ENCODE measurements at regions of chr11 and their contacts with region 1.

Region 1: DNA sequence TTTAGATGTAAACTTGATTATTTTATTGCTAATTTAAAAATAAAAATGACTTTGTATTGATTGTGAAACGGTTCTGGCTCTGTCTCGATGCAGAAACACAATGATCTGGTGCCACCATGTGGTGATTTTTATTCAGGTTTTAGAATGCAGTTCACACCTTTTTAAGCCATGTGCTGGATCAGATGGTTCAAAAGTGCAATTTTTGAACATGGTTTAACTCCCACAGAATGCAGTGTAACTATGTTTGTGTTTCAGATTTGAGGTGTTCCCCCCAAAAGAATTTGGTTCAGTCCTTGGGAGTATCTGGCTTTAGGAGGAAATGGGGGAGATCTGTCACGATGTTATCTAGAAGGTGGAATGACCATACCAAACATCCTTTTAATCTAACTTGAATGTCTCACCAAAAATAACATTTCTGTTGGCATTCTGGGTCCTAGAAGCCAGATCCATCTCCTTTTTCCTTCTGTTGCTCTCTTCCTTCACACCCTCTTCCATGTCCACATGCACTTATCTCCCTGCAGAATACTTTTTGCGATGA is 7.9 kb downstream of the MRPL16 start:
- DNase-seq: peak; percentile 73
- H3K4me3 ChIP-seq: no peak overlapping the region
- H3K27ac ChIP-seq: no peak overlapping the region
- H3K4me1 ChIP-seq: peaks cover 4% of the 10 kb centered on the region
- CTCF ChIP-seq: peak; percentile 92

Region 2: GRCh38 chr11:59542142-59542810 is 260.4 kb before region 1 on chr11:
- CTCF ChIA-PET with region 1: no interaction called
- POLR2A ChIA-PET with region 1: no interaction called
- intact Hi-C with region 1: loop called (anchors 2 kb)
- DNase-seq: no peak
- H3K4me3 ChIP-seq: no peak overlapping the region
- H3K27ac ChIP-seq: no peak overlapping the region
- H3K4me1 ChIP-seq: peaks cover 5% of the 10 kb centered on the region
- CTCF ChIP-seq: no peak

Region 3: DNA sequence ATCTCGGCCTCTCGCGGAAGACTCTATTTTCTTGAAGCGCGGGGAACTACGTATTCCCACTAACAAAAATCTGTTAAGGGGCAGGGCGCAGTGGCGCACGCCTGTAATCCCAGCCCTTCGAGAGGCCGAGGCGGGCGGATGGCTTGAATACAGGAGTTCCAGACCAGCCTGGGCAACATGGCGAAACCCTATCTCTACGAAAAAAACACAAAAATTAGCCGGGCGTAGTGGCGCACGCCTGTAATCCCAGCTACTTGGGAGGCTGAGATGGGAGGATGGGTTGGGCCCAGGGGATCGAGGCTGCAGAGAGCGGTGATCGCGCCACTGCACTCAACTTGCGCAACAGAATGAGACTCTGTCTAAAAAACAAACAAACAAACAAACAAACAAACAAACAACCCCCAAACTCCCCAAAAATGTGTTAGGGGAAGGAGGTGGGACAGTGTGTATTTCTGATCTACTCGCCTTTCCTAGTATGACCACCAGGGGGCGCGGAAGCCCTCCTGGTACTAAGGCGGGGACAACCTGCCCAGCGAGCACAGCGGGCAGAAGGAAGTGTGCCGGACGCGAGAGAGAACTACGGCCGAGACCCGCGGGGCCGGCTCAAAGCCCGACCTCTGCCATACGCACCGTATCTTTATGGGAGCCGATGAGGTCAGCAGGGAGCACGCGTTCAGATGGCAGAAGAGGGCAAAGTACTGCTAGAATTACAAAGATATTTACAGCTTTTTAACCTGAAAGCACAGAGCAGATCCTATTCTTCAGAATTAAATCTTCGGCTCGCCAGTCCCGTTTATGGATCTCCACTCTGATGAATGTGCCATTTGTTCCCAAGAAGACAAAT is 48.8 kb before region 1 on chr11:
- CTCF ChIA-PET with region 1: interaction called, 9 read pairs
- POLR2A ChIA-PET with region 1: interaction called, 6 read pairs
- intact Hi-C with region 1: loop called (anchors 1 kb)
- DNase-seq: peak; percentile 85
- H3K4me3 ChIP-seq: peak overlapping the region; percentile 86
- H3K27ac ChIP-seq: no peak overlapping the region
- H3K4me1 ChIP-seq: peaks cover 16% of the 10 kb centered on the region
- CTCF ChIP-seq: peak; percentile 89

Region 4: GRCh38 chr11:59771605-59772004 is 31.1 kb before region 1 on chr11:
- CTCF ChIA-PET with region 1: no interaction called
- POLR2A ChIA-PET with region 1: interaction called, 11 read pairs
- intact Hi-C with region 1: no loop called
- DNase-seq: no peak
- H3K4me3 ChIP-seq: peak overlapping the region; percentile 9
- H3K27ac ChIP-seq: peak overlapping the region; percentile 51
- H3K4me1 ChIP-seq: peaks cover 28% of the 10 kb centered on the region
- CTCF ChIP-seq: no peak